ENCODE measurements at regions of chr2 and their contacts with region 1.

Region 1: GRCh38 chr2:75680402-75680801 is 30.3 kb downstream of the GCFC2 start:
- DNase-seq: no peak
- H3K4me3 ChIP-seq: no peak overlapping the region
- H3K27ac ChIP-seq: no peak overlapping the region
- H3K4me1 ChIP-seq: peaks cover 0 to 2% (median 0%) of the 10 kb centered on the region in 4 experiments
- H3K27me3 ChIP-seq: no peaks in the 10 kb centered on the region

Region 2: GRCh38 chr2:75640621-75641121 is 39.7 kb before region 1 on chr2:
- CTCF ChIA-PET with region 1: interaction called, 21 read pairs
- POLR2A ChIA-PET with region 1: no interaction called
- DNase-seq: peak; percentile 31 to 66 (median 54)
- H3K4me3 ChIP-seq: no peak overlapping the region
- H3K27ac ChIP-seq: no peak overlapping the region
- H3K4me1 ChIP-seq: no peaks in the 10 kb centered on the region
- H3K27me3 ChIP-seq: peaks cover 0 to 11% (median 2%) of the 10 kb centered on the region in 5 experiments

Region 3: DNA sequence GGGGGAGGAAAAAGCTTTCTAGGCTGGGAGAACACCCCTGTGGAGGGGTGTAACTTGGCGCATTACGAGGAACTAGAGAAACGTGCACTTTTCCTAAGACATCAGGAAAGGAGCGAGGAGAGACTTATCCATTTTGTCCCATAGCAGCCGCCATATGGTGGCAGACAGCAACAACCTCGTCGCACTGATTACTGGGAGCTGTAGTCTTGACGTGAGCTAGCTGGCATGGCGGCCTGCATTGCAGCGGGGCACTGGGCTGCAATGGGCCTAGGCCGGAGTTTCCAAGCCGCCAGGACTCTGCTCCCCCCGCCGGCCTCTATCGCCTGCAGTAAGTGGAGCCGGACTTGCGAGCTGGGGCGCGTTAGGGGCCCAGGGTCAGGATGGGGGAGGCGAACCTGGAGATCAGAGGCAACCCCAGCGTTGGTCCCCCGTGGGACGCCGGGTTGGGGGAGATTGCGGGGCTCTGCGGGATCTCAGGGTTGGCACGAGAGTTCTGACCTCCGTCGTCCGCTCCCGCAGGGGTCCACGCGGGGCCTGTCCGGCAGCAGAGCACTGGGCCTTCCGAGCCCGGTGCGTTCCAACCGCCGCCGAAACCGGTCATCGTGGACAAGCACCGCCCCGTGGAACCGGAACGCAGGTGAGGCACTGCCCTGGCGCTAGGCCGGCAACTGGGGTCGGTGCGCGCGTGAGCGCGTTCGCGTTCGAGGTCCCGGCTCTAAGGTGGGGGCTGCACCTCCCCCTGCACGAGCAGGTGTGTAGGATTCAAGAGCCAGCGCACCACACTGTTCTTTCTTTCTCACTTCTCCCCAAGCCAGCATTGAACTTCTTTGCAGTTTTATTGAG is 33.6 kb before region 1 on chr2 and contains the start of gene MRPL19:
- CTCF ChIA-PET with region 1: interaction called, 21 read pairs
- POLR2A ChIA-PET with region 1: no interaction called
- DNase-seq: peak; percentile 83 to 90 (median 87)
- H3K4me3 ChIP-seq: peak within 1 kb of the TSS; percentile 88 to 97 (median 91)
- H3K27ac ChIP-seq: peak within 1 kb of the TSS; percentile 62 to 88
- H3K4me1 ChIP-seq: peaks cover 0 to 14% (median 8%) of the 10 kb centered on the region in 4 experiments
- H3K27me3 ChIP-seq: no peaks in the 10 kb centered on the region

Region 4: GRCh38 chr2:75667884-75668283 is 12.5 kb before region 1 on chr2:
- CTCF ChIA-PET with region 1: interaction called, 15 read pairs
- POLR2A ChIA-PET with region 1: no interaction called
- DNase-seq: no peak
- H3K4me3 ChIP-seq: no peak overlapping the region
- H3K27ac ChIP-seq: no peak overlapping the region
- H3K4me1 ChIP-seq: no peaks in the 10 kb centered on the region
- H3K27me3 ChIP-seq: no peaks in the 10 kb centered on the region

Measured in common myeloid progenitor, CD34-positive (primary cell).